Colonic mucosa (tissue), 4 donors: ENCODE measurements at regions of chr10 and their contacts with region 1.

Region 1: GRCh38 chr10:95363303-95363912 is 72.6 kb upstream of the PDLIM1 start:
- DNase-seq: peak; percentile 70
- H3K4me3 ChIP-seq: no peak overlapping the region
- H3K27ac ChIP-seq: no peak overlapping the region
- H3K4me1 ChIP-seq: peaks cover 3% of the 10 kb centered on the region
- H3K27me3 ChIP-seq: no peaks in the 10 kb centered on the region
- CTCF ChIP-seq: peak; percentile 91

Region 2: DNA sequence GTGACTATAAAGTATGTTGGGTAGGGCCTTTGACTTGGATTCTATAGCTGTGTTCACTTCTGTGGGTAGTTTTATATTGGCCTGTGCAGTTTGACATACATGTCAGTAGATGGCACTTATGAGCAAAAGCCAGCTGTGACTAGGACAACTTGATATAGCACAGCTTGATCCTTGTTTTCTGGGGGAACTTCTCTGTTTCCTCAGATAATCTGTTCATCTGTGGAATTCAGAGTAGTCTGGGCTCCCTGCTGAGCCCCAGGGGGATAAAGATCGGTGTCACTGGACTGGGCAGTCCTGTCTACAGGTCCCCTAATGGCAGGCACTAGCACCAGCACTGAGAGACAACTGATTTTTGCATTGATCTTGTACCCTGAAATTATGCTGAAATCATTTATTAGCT is 399.5 kb before region 1 on chr10:
- intact Hi-C with region 1: loop called (anchors 10 kb)
- DNase-seq: peak; percentile 16
- H3K4me3 ChIP-seq: no peak overlapping the region
- H3K27ac ChIP-seq: no peak overlapping the region
- H3K4me1 ChIP-seq: no peaks in the 10 kb centered on the region
- H3K27me3 ChIP-seq: no peaks in the 10 kb centered on the region
- CTCF ChIP-seq: peak; percentile 54

Region 3: GRCh38 chr10:95133016-95133752 is 230.2 kb before region 1 on chr10:
- intact Hi-C with region 1: loop called (anchors 5 kb)
- DNase-seq: peak; percentile 83
- H3K4me3 ChIP-seq: no peak overlapping the region
- H3K27ac ChIP-seq: no peak overlapping the region
- H3K4me1 ChIP-seq: no peaks in the 10 kb centered on the region
- H3K27me3 ChIP-seq: no peaks in the 10 kb centered on the region
- CTCF ChIP-seq: peak; percentile 61

Region 4: GRCh38 chr10:95183271-95184230 is 179.9 kb before region 1 on chr10:
- intact Hi-C with region 1: loop called (anchors 2 kb)
- DNase-seq: peak; percentile 93
- H3K4me3 ChIP-seq: peak overlapping the region; percentile 56
- H3K27ac ChIP-seq: peak overlapping the region; percentile 66
- H3K4me1 ChIP-seq: no peaks in the 10 kb centered on the region
- H3K27me3 ChIP-seq: no peaks in the 10 kb centered on the region
- CTCF ChIP-seq: peak; percentile 90

Region 5: GRCh38 chr10:95246579-95247051 is 116.8 kb before region 1 on chr10:
- intact Hi-C with region 1: loop called (anchors 2 kb)
- DNase-seq: peak; percentile 79
- H3K4me3 ChIP-seq: no peak overlapping the region
- H3K27ac ChIP-seq: no peak overlapping the region
- H3K4me1 ChIP-seq: no peaks in the 10 kb centered on the region
- H3K27me3 ChIP-seq: no peaks in the 10 kb centered on the region
- CTCF ChIP-seq: peak; percentile 81